ENCODE measurements at regions of chr22 and their contacts with region 1.

Region 1: DNA sequence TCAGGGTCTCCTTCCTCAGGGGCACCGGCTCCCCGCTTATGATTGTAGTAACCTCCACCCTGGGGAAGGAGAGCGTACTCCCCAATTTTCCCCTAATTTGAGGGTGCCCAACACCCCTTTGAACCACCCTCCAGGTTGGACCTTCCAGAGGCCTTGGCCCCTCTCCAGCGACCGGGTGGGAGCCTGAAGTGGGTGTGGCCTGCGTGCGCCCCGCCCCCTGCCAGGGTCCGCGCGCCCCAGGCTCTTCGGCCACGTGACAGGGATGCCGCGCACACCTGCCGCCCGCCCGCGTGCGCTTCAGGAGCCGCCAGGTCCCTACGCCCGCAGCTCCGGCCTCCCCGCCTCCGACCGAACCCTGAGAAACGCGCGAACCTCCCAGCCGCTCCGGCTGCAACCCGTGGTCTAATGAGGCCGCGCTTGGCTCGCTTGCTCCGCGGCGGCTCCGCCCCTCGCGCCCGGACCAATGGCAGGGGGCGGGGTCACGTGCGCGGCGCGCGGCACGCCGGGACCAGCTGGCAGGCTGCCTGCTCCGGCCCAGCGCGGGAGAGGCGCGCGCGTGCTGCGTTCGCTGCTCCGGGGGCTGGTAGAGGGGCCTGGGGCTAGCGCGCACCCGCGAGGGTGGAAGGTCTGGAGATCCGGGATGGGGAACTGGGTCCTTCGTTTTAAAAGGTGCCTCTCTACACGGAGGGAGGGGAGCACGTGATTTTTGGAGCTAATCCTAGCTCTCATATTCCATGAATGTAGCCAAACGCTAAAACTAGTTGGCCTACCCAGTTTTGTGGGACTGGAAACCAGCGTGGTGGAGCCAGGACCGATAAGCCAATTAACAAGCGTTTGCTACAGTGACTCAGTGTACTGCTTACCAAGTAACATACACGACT is at the start of gene FOXRED2:
- DNase-seq: peak; percentile 75
- ATAC-seq: peak; percentile 79
- H3K4me3 ChIP-seq: peak within 1 kb of the TSS; percentile 45 to 66 (median 52); a peak in 5 of 6 replicates
- H3K27ac ChIP-seq: peak within 1 kb of the TSS; percentile 76
- H3K4me1 ChIP-seq: peaks cover 42% of the 10 kb centered on the region
- H3K27me3 ChIP-seq: no peaks in the 10 kb centered on the region
- CTCF ChIP-seq: no peak; the same call in 1 of the 2 replicates
- EP300 ChIP-seq: peak in 1 of 2 experiments; percentile 48; a peak in 2 of 4 replicates
- POLR2A ChIP-seq: peak; percentile 65 to 84
- RAD21 ChIP-seq: peak; percentile 60; the same call in 1 of the 2 replicates
- total RNA-seq, gene FOXRED2: 20.8 and 28.1 TPM in 2 replicates

Region 2: DNA sequence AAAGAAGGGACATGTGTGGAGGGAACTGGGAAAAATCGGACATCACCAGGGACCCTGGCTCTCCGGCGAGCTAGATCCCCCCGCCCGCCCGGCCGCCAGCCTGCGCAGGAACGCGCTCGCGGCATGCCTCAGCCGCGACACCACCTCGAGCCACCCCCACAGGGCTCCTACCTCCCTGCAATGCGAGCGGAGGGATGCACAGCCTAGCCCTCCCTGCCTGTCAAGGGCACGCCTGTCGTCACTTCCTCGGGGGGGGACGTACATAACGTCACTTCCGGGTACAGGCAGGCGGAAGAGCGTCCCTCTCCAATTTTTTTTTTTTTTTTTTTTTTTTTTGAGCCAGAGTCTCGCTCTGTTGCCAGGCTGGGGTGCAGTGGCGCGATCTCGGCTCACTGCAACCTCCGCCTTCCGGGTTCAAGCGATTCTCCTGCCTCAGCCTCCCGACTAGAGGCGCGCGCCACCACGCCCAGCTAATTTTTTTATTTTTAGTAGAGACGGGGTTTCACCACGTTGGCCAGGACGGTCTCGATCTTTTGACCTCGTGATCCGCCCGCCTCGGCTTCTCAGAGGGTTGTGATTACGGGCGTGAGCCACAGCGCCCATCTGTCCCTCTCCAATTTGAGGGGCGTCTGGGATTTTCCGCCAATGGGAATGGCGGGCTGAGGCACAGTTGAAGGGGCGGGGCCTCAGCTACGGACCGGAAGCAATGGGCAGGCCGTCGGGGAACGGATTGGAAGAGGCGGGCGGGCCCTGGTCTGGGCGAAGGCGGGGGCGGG is 25.3 kb before region 1 on chr22 and contains the start of gene TXN2:
- CTCF ChIA-PET with region 1: no interaction called
- POLR2A ChIA-PET with region 1: interaction called, 13 read pairs
- in situ Hi-C with region 1: no loop called
- intact Hi-C with region 1: no loop called
- DNase-seq: peak; percentile 91
- ATAC-seq: peak; percentile 92
- H3K4me3 ChIP-seq: peak within 1 kb of the TSS; percentile 69 to 88 (median 88)
- H3K27ac ChIP-seq: peak within 1 kb of the TSS; percentile 96
- H3K4me1 ChIP-seq: peaks cover 24% of the 10 kb centered on the region
- H3K27me3 ChIP-seq: no peaks in the 10 kb centered on the region; a peak in 1 of 5 replicates
- CTCF ChIP-seq: no peak
- EP300 ChIP-seq: peak; percentile 10 to 13; a peak in 2 of 4 replicates
- POLR2A ChIP-seq: peak; percentile 89 to 90
- RAD21 ChIP-seq: no peak
- total RNA-seq, gene TXN2: 41.4 and 61.4 TPM in 2 replicates

Region 3: GRCh38 chr22:36528795-36529751 is 22.2 kb after region 1 on chr22 and contains the start of gene EIF3D:
- CTCF ChIA-PET with region 1: no interaction called
- POLR2A ChIA-PET with region 1: interaction called, 21 read pairs
- in situ Hi-C with region 1: no loop called
- intact Hi-C with region 1: no loop called
- DNase-seq: peak; percentile 99
- ATAC-seq: peak; percentile 94
- H3K4me3 ChIP-seq: peak within 1 kb of the TSS; percentile 87 to 88 (median 88)
- H3K27ac ChIP-seq: peak within 1 kb of the TSS; percentile 97
- H3K4me1 ChIP-seq: peaks cover 30% of the 10 kb centered on the region
- H3K27me3 ChIP-seq: no peaks in the 10 kb centered on the region; a peak in 2 of 5 replicates
- CTCF ChIP-seq: no peak; the same call in 1 of the 2 replicates
- EP300 ChIP-seq: no peak; a peak in 1 of 4 replicates
- POLR2A ChIP-seq: peak; percentile 73 to 76
- RAD21 ChIP-seq: 0 out of 2 replicates have a peak, but pooled peaks have one; percentile 9
- total RNA-seq, gene EIF3D: 118 and 127 TPM in 2 replicates

Measured in HepG2 (cell line).